ENCODE measurements at regions of chr20 and their contacts with region 1.

Region 1: GRCh38 chr20:5080384-5080877 is 39.3 kb downstream of the PCNA start:
- DNase-seq: peak; percentile 90 to 98 (median 97)
- H3K4me3 ChIP-seq: peak overlapping the region in 1 of 7 experiments; percentile 30
- H3K27ac ChIP-seq: peak overlapping the region; percentile 66 to 85
- H3K4me1 ChIP-seq: peaks cover 35 to 47% (median 40%) of the 10 kb centered on the region in 4 experiments
- H3K27me3 ChIP-seq: no peaks in the 10 kb centered on the region

Region 2: GRCh38 chr20:5065879-5066383 is 14.5 kb before region 1 on chr20:
- CTCF ChIA-PET with region 1: interaction called, 10 read pairs
- POLR2A ChIA-PET with region 1: interaction called, 4 read pairs
- DNase-seq: peak; percentile 73 to 88 (median 81)
- H3K4me3 ChIP-seq: no peak overlapping the region
- H3K27ac ChIP-seq: no peak overlapping the region
- H3K4me1 ChIP-seq: peaks cover 0 to 18% (median 8%) of the 10 kb centered on the region in 4 experiments
- H3K27me3 ChIP-seq: no peaks in the 10 kb centered on the region